WTC11 (cell line): ENCODE measurements at regions of chr3 and their contacts with region 1.

Region 1: DNA sequence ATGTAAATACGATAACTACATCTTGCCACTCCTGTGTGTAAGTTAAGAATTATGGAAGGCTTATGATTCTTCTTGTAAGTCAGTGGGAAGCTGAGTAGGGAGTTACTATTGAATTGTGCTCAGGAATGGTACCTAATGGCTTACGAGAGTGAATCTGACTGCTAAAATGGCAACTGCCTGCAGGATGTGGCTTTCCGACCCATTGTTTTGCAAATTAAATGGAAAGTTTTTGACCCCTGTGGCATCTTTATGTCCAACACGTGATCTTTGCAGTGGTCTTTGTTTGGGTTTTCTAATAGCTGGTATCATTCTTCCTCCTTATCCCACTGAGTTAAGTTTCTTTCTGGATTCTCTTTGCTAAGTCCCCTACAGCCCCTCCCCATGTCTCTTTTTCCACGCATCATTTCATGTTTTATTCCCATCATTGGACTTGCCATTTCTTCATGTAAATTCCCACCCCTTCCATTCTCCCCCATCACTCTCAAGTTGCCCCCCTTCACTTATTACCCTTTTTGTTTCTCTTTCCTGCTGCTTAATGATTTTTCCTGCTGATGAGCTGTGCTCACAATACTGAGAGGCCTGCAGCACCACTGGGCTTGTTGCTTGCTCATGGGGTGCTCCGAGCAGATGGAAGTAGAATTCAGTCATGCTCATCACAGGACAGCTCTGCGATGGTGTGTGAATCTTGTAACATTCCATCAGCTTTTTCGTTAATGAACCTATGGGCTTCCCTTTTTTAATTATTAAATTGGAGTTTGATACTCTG is 428.2 kb upstream of the IL12A start:
- DNase-seq: peak; percentile 13
- ATAC-seq: peak; percentile 85
- H3K4me3 Mint-ChIP-seq: peak overlapping the region; percentile 50
- H3K27ac Mint-ChIP-seq: peak overlapping the region; percentile 98
- H3K4me1 Mint-ChIP-seq: peaks cover 41% of the 10 kb centered on the region
- H3K27me3 Mint-ChIP-seq: peaks cover 46% of the 10 kb centered on the region
- CTCF ChIP-seq: no peak

Region 2: DNA sequence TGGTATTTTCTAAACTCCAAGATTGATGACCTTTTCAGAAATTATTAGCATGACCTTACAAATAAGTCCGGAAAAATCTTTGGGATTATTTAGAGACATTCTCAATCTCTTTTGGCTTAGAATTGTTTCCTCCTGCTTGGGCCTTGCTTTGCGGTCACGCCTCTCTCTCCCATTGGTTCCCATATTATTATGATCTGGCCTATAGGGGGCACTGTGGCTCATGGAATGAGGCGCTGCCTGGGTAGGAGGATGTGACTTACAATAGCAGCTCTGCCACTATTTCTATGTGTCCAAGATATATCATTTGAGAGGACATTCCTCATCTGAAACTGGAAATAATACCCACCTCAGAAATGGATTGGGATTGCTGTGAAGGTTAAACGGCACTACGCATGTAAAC is 293.6 kb before region 1 on chr3:
- CTCF ChIA-PET with region 1: interaction called, 15 read pairs
- POLR2A ChIA-PET with region 1: no interaction called
- DNase-seq: peak; percentile 74
- ATAC-seq: peak; percentile 97
- H3K4me3 Mint-ChIP-seq: no peak overlapping the region
- H3K27ac Mint-ChIP-seq: no peak overlapping the region
- H3K4me1 Mint-ChIP-seq: no peaks in the 10 kb centered on the region
- H3K27me3 Mint-ChIP-seq: no peaks in the 10 kb centered on the region
- CTCF ChIP-seq: peak; percentile 60

Region 3: DNA sequence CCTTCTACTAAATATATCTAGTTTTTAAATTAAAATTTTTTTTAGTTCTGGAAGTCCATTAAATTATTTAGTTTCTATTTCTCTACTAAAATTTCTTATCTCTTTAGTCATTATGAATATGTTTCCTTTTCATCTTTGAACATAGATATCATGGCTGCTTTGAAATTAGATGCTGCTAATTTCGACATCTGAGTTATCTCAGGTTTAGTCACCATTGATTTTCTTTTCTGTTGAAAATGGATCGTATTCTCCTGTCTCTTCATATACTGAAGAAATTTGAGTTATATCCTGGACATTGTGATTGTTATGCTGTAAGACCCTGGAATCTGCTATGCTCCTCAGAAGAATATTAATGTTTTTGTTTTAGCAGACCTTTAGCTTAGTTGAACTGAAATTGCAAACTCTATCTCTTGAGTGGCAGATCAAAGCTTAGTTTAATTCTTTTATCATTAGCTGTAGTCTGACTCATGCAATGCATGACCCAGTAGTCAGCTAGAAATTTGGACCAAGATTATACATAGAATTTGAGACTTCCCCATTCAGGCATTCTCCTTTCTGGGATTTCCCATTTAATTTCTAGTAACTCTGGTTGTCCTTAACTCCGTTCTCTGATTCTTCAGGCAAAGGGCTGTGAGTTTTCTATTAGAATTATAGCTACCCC is 11.6 kb before region 1 on chr3:
- CTCF ChIA-PET with region 1: no interaction called
- POLR2A ChIA-PET with region 1: no interaction called
- DNase-seq: no peak
- ATAC-seq: no peak
- H3K4me3 Mint-ChIP-seq: no peak overlapping the region
- H3K27ac Mint-ChIP-seq: no peak overlapping the region
- H3K4me1 Mint-ChIP-seq: no peaks in the 10 kb centered on the region
- H3K27me3 Mint-ChIP-seq: no peaks in the 10 kb centered on the region
- CTCF ChIP-seq: no peak

Region 4: DNA sequence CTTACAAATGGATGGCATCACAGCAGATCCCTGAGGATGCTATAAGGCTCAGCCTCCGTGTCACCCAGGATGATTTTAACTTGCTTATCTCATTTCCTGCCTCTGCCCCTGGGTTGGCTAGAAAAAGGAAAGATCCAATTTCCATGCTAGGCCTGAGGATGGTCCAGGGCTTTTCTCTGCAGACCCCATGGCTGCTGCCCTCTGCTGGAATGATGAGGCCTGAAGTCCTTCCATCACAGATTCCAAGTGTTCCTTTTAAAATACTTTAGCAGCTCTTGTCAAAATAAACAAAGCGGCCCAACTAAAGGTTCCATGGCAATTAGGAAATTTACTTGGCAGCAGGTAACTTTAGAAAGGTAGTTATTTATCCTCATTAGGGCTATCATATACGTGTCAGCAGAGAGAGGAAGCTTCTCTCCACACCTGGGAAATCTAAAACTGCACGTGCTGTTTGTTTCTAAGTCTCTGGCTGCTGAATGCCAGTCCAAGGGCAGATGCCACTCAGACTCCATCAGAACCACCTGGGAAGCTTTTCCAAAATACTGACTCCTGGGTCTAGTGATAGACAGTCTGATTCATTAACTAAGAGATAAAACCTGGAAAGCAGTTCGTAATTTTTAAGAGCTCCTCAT is 26.3 kb after region 1 on chr3:
- CTCF ChIA-PET with region 1: interaction called, 18 read pairs
- POLR2A ChIA-PET with region 1: no interaction called
- DNase-seq: peak; percentile 66
- ATAC-seq: peak; percentile 99
- H3K4me3 Mint-ChIP-seq: no peak overlapping the region
- H3K27ac Mint-ChIP-seq: no peak overlapping the region
- H3K4me1 Mint-ChIP-seq: peaks cover 8% of the 10 kb centered on the region
- H3K27me3 Mint-ChIP-seq: no peaks in the 10 kb centered on the region
- CTCF ChIP-seq: peak; percentile 58

Region 5: DNA sequence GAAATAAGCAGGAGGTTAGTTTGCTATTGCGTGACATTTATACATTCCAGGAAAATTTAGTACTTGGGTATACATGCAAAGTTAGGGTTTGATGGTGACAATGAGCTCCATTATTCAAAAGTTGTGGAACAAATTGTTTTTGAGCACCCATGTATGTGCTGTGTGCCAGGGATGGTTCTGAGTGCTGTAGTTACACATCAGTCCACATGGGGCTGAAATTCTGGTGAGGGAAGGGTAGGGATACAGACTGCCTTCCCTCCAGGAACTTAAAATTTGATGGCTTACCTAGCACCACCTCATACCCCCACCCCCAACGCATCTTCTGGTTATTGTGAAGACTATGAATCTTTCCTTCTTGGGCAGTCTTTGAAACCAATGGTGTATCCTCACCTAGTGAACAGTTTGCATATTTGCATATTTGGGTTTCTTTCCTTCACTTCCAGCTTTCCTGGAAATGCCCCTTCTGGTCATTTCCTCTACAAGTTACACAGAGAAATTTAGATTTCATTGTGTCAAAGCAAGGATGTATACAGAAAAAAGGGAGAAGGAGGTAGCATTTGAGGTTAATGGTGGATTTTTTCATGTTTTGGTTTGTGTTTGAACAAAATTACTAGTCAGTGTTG is 206.3 kb after region 1 on chr3:
- CTCF ChIA-PET with region 1: no interaction called
- POLR2A ChIA-PET with region 1: no interaction called
- DNase-seq: peak; percentile 20
- ATAC-seq: peak; percentile 18
- H3K4me3 Mint-ChIP-seq: peak overlapping the region; percentile 75
- H3K27ac Mint-ChIP-seq: no peak overlapping the region
- H3K4me1 Mint-ChIP-seq: peaks cover 34% of the 10 kb centered on the region
- H3K27me3 Mint-ChIP-seq: peaks cover 17% of the 10 kb centered on the region
- CTCF ChIP-seq: peak; percentile 50